Panc1 (cell line): ENCODE measurements at regions of chr20 and their contacts with region 1.

Region 1: GRCh38 chr20:50670126-50670862 is 21.0 kb downstream of the RIPOR3 start:
- DNase-seq: peak; percentile 85
- ATAC-seq: peak; percentile 92
- H3K4me3 ChIP-seq: no peak overlapping the region
- H3K27ac ChIP-seq: peak overlapping the region; percentile 99
- H3K4me1 ChIP-seq: peaks cover 86% of the 10 kb centered on the region
- H3K27me3 ChIP-seq: no peaks in the 10 kb centered on the region
- CTCF ChIP-seq: no peak

Region 2: GRCh38 chr20:50655311-50655880 is 14.9 kb before region 1 on chr20:
- CTCF ChIA-PET with region 1: no interaction called
- POLR2A ChIA-PET with region 1: interaction called, 13 read pairs
- in situ Hi-C with region 1: no loop called
- intact Hi-C with region 1: no loop called
- DNase-seq: no peak
- ATAC-seq: peak; percentile 51
- H3K4me3 ChIP-seq: peak overlapping the region in 1 of 2 experiments; percentile 28; a peak in 2 of 4 replicates
- H3K27ac ChIP-seq: peak overlapping the region; percentile 92
- H3K4me1 ChIP-seq: peaks cover 57% of the 10 kb centered on the region
- H3K27me3 ChIP-seq: no peaks in the 10 kb centered on the region
- CTCF ChIP-seq: no peak

Region 3: DNA sequence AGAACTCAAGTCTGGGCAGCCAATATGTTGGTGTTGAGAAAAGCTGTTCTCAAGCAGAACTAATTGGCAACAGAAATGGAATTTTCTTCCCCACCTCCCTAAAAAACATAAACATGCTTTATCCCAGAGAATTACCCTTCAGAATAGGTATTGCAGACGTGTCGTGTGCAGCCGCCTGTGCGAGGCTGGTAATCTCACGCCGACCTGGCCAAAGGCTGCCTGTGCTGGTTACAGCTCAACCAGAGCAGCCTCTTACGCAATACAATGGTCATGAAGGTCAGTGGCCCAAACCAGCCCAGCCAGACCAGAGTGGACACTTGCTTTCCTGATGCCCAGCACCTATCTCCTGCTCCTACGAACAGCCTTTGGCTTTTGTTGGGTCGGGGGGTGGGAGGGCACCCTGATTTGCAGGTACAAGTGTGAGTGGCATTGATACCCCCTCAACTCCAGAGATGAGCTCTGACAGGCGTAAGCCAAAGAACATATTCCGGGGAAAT is 10.2 kb after region 1 on chr20:
- CTCF ChIA-PET with region 1: no interaction called
- POLR2A ChIA-PET with region 1: interaction called, 12 read pairs
- in situ Hi-C with region 1: no loop called
- intact Hi-C with region 1: no loop called
- DNase-seq: no peak
- ATAC-seq: peak; percentile 57
- H3K4me3 ChIP-seq: peak overlapping the region in 1 of 2 experiments; percentile 16; a peak in 2 of 4 replicates
- H3K27ac ChIP-seq: peak overlapping the region; percentile 99
- H3K4me1 ChIP-seq: peaks cover 69% of the 10 kb centered on the region
- H3K27me3 ChIP-seq: no peaks in the 10 kb centered on the region
- CTCF ChIP-seq: no peak

Region 4: GRCh38 chr20:50703525-50704438 is 33.5 kb after region 1 on chr20:
- CTCF ChIA-PET with region 1: interaction called, 10 read pairs
- POLR2A ChIA-PET with region 1: no interaction called
- in situ Hi-C with region 1: no loop called
- intact Hi-C with region 1: no loop called
- DNase-seq: no peak
- ATAC-seq: no peak
- H3K4me3 ChIP-seq: no peak overlapping the region
- H3K27ac ChIP-seq: peak overlapping the region; percentile 96
- H3K4me1 ChIP-seq: peaks cover 34% of the 10 kb centered on the region
- H3K27me3 ChIP-seq: no peaks in the 10 kb centered on the region
- CTCF ChIP-seq: no peak

Region 5: GRCh38 chr20:50724851-50725721 is 54.8 kb after region 1 on chr20:
- CTCF ChIA-PET with region 1: interaction called, 3 read pairs
- POLR2A ChIA-PET with region 1: interaction called, 8 read pairs
- in situ Hi-C with region 1: no loop called
- intact Hi-C with region 1: loop called (anchors 10 kb)
- DNase-seq: no peak
- ATAC-seq: peak; percentile 82
- H3K4me3 ChIP-seq: peak overlapping the region in 1 of 2 experiments; percentile 10; a peak in 2 of 4 replicates
- H3K27ac ChIP-seq: peak overlapping the region; percentile 100
- H3K4me1 ChIP-seq: peaks cover 73% of the 10 kb centered on the region
- H3K27me3 ChIP-seq: no peaks in the 10 kb centered on the region
- CTCF ChIP-seq: no peak

Region 6: DNA sequence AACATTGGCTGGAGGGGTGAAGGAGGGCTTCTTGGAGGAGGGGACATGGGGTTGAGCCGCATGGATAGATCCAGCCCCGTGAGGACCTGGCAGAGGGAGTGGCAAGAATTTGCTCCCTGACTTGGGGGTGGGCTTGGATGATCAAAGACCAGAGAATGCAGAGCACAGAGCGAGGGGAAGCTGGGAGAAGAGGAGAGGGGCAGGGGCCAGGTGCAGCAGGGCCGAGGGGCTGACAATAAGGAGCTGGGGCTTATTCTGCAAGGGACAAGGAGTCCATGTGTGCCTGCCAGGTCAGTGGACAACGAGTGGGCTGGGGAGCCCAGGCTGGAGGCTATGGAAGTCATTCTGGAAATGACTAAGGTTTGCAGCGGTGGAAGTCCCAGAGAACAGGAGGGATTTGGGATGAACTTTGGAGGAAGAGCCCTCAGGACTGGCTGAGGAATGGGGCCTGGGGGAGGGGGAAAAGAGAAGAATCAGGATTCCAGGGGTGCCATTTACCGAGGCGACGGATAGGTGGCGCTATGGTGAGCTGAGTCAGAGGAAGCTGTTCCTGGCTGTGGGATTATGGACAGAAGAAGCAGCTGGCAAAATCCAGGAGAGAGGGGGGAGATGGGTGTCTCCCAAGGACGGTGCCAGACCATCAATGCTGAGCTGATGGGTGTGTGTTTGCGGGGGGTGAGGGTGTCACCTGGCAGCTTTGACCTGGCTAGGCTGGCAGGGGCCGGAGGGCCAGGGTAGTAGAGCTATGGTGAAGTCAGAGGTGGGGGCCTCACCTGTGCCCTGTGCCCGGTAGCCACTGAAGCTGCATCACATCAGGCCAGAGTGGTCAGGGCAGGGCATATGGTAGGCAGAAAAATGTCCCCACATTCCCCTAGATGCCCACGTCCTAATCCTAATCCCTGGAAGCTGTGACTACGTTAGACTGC is 344.8 kb after region 1 on chr20:
- CTCF ChIA-PET with region 1: no interaction called
- POLR2A ChIA-PET with region 1: no interaction called
- in situ Hi-C with region 1: no loop called
- intact Hi-C with region 1: no loop called
- DNase-seq: no peak
- ATAC-seq: peak; percentile 72
- H3K4me3 ChIP-seq: no peak overlapping the region
- H3K27ac ChIP-seq: no peak overlapping the region
- H3K4me1 ChIP-seq: 0 out of 2 replicates have a peak, but pooled peaks cover 2% of the 10 kb centered on the region
- H3K27me3 ChIP-seq: no peaks in the 10 kb centered on the region
- CTCF ChIP-seq: peak; percentile 87

Region 7: DNA sequence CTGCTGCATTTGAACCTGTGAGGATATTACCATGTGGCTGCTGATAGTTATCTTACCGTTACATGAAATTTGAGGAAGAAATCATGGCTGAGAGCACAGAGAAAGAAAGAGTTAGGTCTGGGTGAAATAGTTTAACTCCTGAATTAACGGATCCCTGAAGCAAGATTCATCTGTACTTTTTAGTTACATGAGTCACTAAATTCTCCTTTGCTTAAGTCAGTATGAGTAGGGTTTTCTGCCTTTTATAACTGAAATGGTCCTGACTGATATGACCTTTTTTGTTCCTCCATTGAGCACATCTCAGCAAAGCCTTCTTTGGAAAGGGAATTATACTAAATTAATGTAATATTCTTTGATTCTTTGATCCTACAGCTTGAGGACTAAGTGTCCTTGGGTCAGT is 1854.6 kb after region 1 on chr20:
- CTCF ChIA-PET with region 1: no interaction called
- POLR2A ChIA-PET with region 1: no interaction called
- in situ Hi-C with region 1: no loop called
- intact Hi-C with region 1: no loop called
- DNase-seq: no peak
- ATAC-seq: no peak
- H3K4me3 ChIP-seq: no peak overlapping the region
- H3K27ac ChIP-seq: no peak overlapping the region
- H3K4me1 ChIP-seq: no peaks in the 10 kb centered on the region
- H3K27me3 ChIP-seq: no peaks in the 10 kb centered on the region
- CTCF ChIP-seq: no peak